Activated B cell treated with CpG ODN at 0.5 μM for 24 hours (primary cell): ENCODE measurements at regions of chr17 and their contacts with region 1.

Region 1: DNA sequence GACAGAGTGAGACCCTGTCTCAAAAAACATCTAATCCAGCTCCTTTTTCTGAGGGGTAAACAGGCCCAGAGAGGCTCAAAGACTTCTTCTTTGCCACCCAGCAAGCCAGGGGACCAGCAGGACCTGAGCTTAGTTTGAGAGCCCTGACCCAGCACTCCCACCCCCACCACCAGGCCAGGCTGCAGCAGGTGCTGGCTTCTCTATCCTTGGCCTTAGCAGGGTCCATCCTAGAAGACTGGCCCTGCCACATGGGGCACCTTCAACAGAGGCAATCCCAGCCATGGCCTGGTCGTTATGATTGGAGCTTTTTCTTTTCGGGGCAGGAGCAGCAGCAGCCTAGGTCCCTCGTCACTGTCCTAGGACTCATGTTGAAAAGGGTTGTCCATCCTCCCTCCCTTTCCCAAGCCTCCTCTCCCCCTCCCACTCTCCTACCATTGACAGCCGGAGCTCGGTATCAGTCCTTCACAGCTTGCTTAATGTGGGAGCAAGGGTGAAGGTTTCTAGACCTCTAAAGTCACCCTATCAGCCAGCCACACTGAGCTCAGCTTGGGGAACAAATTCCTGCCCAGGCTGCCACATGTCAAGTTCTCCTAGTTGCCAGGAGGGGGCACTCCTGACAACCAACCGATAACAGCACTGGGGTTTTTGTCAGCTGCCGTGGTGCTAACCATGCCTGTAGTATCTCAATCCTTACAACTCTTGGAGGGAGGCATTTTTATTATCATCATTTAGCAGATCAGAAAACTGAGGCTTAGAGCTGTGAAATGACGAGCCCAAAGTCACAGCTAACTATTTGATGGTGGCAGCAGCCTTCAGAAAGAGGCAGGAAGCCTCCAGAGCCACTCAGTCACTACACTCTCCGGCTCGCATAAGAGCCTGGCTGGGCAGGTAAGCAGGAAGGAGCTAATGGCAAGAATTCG is 11.2 kb downstream of the MRPL27 start:
- DNase-seq: no peak
- ATAC-seq: peak; percentile 97
- H3K4me3 Mint-ChIP-seq: no peak overlapping the region
- H3K27ac Mint-ChIP-seq: peak overlapping the region; percentile 70
- H3K4me1 Mint-ChIP-seq: peaks cover 7% of the 10 kb centered on the region
- H3K27me3 Mint-ChIP-seq: no peaks in the 10 kb centered on the region
- CTCF ChIP-seq: peak; percentile 30

Region 2: GRCh38 chr17:50337987-50338386 is 23.8 kb before region 1 on chr17:
- CTCF ChIA-PET with region 1: no interaction called
- POLR2A ChIA-PET with region 1: no interaction called
- intact Hi-C with region 1: no loop called
- DNase-seq: no peak
- ATAC-seq: no peak
- H3K4me3 Mint-ChIP-seq: no peak overlapping the region
- H3K27ac Mint-ChIP-seq: no peak overlapping the region
- H3K4me1 Mint-ChIP-seq: peaks cover 1% of the 10 kb centered on the region
- H3K27me3 Mint-ChIP-seq: peaks cover 4% of the 10 kb centered on the region
- CTCF ChIP-seq: no peak

Region 3: GRCh38 chr17:50501054-50501453 is 139.2 kb after region 1 on chr17:
- CTCF ChIA-PET with region 1: interaction called, 18 read pairs
- POLR2A ChIA-PET with region 1: no interaction called
- intact Hi-C with region 1: loop called (anchors 1 kb)
- DNase-seq: no peak
- ATAC-seq: no peak
- H3K4me3 Mint-ChIP-seq: no peak overlapping the region
- H3K27ac Mint-ChIP-seq: no peak overlapping the region
- H3K4me1 Mint-ChIP-seq: no peaks in the 10 kb centered on the region
- H3K27me3 Mint-ChIP-seq: peaks cover 2% of the 10 kb centered on the region
- CTCF ChIP-seq: no peak